Activated CD4-positive, alpha-beta memory T cell treated with anti-CD3 and anti-CD28 coated beads, Interleukin-2, amount 10 ng/mL, durations not matched to agents 7 days and 5 days (primary cell): ENCODE measurements at regions of chr1 and their contacts with region 1.

Region 1: DNA sequence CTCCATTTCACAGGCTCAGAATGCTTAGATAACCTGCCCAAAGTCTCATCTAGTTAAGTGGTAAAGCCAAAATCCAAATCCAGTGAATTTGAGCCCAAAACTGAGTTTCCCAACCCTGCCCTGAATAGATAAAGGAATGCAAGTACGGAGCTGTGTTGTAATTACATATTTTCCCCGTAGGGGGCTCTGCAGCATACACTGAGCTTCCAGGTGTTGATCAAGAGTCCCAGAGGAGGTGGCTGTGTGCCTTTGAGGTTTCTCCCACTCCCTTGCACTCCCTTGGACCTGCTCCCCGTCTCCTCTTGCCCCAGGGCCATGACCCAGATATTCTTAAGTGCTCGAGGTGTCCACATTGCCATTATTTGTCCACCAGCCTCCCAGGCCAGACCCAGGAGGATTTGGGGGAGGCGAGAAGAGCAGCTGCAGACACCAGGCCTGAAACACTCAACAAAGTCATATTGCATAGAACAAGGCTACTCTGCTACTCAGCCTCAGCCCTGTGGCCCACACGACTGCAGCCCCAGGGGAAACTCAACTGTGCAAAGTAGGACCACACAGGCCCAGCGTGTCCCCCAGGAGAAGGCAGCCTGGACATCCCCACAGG is 18.4 kb upstream of the LY9 start:
- DNase-seq: peak; percentile 56
- H3K4me3 Mint-ChIP-seq: no peak overlapping the region
- H3K27ac Mint-ChIP-seq: no peak overlapping the region
- H3K4me1 Mint-ChIP-seq: peaks cover 37% of the 10 kb centered on the region
- H3K27me3 Mint-ChIP-seq: no peaks in the 10 kb centered on the region

Region 2: DNA sequence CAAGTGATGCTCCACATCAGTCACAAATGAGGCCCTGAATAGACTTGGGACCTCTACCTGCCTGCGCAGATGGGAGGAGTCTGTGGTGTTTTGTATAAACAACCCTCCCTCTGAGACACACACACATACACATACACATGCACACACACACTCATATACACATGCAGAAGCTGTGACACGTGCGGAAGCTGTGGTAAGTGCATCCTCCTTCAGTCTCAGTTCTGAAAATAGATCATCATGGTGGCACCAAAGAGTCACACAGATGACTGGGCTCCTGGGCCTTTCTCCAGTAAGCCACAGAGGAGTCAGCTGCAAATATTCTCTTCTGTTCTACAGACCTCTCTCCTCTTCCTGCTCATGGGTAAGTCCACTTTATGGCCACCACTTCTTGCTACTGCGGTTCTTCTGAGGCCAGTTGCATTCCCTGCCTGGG is 18.4 kb after region 1 on chr1 and contains the start of gene LY9:
- CTCF ChIA-PET with region 1: interaction called, 52 read pairs
- POLR2A ChIA-PET with region 1: interaction called, 45 read pairs
- DNase-seq: peak; percentile 88
- H3K4me3 Mint-ChIP-seq: peak within 1 kb of the TSS; percentile 91
- H3K27ac Mint-ChIP-seq: peak within 1 kb of the TSS; percentile 96
- H3K4me1 Mint-ChIP-seq: peaks cover 66% of the 10 kb centered on the region
- H3K27me3 Mint-ChIP-seq: peaks cover 3% of the 10 kb centered on the region
- total RNA-seq, gene LY9: 46.4 to 49.9 TPM

Region 3: DNA sequence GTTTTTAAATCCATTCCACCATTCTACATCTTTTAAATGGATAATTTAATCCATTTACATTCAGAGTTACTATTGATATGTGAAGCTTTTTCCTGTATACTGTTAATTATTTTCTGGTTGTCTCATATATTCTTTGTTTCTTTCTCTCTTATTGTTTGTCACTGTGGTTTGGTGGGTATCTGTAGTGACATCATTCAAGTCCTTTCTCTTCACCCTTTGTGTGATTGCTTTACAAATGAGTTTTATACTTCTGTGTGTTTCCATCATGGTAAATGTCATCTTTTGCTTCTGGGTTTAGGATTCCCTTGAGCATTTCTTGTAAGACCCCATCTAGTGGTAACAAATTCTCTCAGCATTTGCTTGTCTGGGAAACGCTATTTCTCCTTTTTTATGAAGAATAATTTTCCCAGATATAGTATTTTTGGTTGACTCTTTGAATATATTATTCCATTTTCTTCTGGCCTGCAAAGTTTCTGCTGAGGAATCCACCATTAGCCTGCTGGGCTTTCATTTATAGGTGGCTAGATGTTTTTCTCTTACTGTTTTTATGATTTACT is 28.6 kb after region 1 on chr1:
- CTCF ChIA-PET with region 1: interaction called, 10 read pairs
- POLR2A ChIA-PET with region 1: no interaction called
- DNase-seq: no peak
- H3K4me3 Mint-ChIP-seq: no peak overlapping the region
- H3K27ac Mint-ChIP-seq: no peak overlapping the region
- H3K4me1 Mint-ChIP-seq: peaks cover 27% of the 10 kb centered on the region
- H3K27me3 Mint-ChIP-seq: peaks cover 6% of the 10 kb centered on the region

Region 4: GRCh38 chr1:160830321-160831153 is 52.9 kb after region 1 on chr1:
- CTCF ChIA-PET with region 1: interaction called, 79 read pairs
- POLR2A ChIA-PET with region 1: interaction called, 5 read pairs
- DNase-seq: peak; percentile 80
- H3K4me3 Mint-ChIP-seq: no peak overlapping the region
- H3K27ac Mint-ChIP-seq: no peak overlapping the region
- H3K4me1 Mint-ChIP-seq: peaks cover 18% of the 10 kb centered on the region
- H3K27me3 Mint-ChIP-seq: no peaks in the 10 kb centered on the region